Activated T-helper 1 cell treated with anti-CD3 and anti-CD28 coated beads, Interleukin-12 subunit alpha, Interleukin-12 subunit beta, Interleukin-2, Interleukin-4 antibody, amounts not matched to agents 30 ng/mL and 10 ng/mL and 1 ng/mL, durations not matched to agents 14 hours and 24 hours and 36 hours (primary cell): ENCODE measurements at regions of chr7 and their contacts with region 1.

Region 1: GRCh38 chr7:142811154-142811737 is 40.5 kb downstream of the PRSS2 start:
- DNase-seq: no peak
- H3K4me3 Mint-ChIP-seq: peak overlapping the region; percentile 79
- H3K27ac Mint-ChIP-seq: peak overlapping the region; percentile 99
- H3K4me1 Mint-ChIP-seq: peaks cover 80% of the 10 kb centered on the region
- H3K27me3 Mint-ChIP-seq: peaks cover 2% of the 10 kb centered on the region

Region 2: GRCh38 chr7:141558544-141559183 is 1252.6 kb before region 1 on chr7:
- intact Hi-C with region 1: loop called (anchors 2 kb)
- DNase-seq: peak; percentile 31
- H3K4me3 Mint-ChIP-seq: peak overlapping the region; percentile 60
- H3K27ac Mint-ChIP-seq: peak overlapping the region; percentile 94
- H3K4me1 Mint-ChIP-seq: peaks cover 83% of the 10 kb centered on the region
- H3K27me3 Mint-ChIP-seq: no peaks in the 10 kb centered on the region

Region 3: GRCh38 chr7:142231716-142232115 is 579.5 kb before region 1 on chr7:
- intact Hi-C with region 1: no loop called
- DNase-seq: no peak
- H3K4me3 Mint-ChIP-seq: no peak overlapping the region
- H3K27ac Mint-ChIP-seq: no peak overlapping the region
- H3K4me1 Mint-ChIP-seq: no peaks in the 10 kb centered on the region
- H3K27me3 Mint-ChIP-seq: peaks cover 8% of the 10 kb centered on the region

Region 4: DNA sequence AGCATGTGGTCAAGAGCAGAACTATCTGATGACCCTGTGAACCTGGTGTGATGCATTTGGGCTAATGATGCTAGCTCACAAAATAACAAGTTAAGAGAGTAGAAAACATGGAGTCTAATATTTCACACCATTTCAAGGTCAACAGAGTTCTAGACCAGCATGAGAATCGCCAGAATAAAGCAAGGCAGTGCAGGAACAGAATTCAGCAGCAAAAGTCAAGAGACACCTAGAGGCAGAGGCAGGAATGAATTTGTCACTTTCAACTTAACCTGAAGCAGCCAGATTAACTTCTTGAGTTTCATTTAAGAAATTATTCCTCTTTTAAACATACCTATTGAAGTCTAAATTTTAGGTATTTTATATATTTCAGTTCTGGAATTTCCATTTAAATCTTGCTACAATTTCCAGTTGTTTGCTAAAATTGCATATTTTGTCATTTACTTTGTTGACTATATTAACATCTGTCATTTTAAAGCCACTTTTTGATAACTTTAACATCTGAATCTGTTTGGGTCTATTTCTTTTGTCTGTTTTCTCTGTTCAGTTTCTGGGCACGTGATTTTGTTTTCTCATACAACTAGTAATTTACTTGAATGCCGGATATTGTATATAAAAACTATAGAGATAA is 509.2 kb before region 1 on chr7:
- intact Hi-C with region 1: loop called (anchors 2 kb)
- DNase-seq: no peak
- H3K4me3 Mint-ChIP-seq: no peak overlapping the region
- H3K27ac Mint-ChIP-seq: no peak overlapping the region
- H3K4me1 Mint-ChIP-seq: peaks cover 10% of the 10 kb centered on the region
- H3K27me3 Mint-ChIP-seq: peaks cover 7% of the 10 kb centered on the region

Region 5: GRCh38 chr7:142523821-142524460 is 287.3 kb before region 1 on chr7:
- intact Hi-C with region 1: no loop called
- DNase-seq: no peak
- H3K4me3 Mint-ChIP-seq: no peak overlapping the region
- H3K27ac Mint-ChIP-seq: no peak overlapping the region
- H3K4me1 Mint-ChIP-seq: peaks cover 10% of the 10 kb centered on the region
- H3K27me3 Mint-ChIP-seq: peaks cover 10% of the 10 kb centered on the region

Region 6: DNA sequence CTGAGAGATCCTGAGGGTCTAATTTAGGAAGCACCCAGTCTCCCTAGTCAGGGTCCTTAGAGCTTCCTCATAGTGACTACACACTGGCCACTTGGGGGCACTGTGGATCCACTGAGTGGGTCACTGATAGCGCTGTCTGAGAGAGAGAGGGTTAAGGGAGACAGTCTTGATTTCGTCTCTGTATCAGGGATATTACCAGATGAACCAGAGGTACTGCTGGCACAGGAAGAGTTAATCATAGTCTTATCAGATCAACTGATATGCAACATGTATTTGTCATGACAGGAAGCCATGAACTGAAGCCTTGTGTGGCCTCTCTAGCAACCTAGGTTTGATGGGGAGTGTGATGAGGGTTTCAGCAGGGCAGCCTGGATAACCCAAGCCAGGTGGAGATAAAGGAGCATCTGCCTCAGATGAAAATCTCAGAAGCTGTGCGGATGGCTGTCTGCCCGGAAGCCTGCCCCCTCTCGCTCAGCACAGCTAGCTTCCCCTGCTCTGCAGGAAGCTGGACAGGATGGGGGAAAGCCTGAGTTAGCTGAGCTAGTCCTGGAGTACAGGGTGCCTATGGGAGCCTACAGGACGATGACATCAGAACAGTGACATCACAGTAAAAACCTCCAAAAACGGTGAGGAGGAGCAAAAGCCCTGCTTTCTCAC is 276.0 kb before region 1 on chr7:
- intact Hi-C with region 1: loop called (anchors 1 kb)
- DNase-seq: peak; percentile 58
- H3K4me3 Mint-ChIP-seq: peak overlapping the region; percentile 59
- H3K27ac Mint-ChIP-seq: peak overlapping the region; percentile 62
- H3K4me1 Mint-ChIP-seq: peaks cover 29% of the 10 kb centered on the region
- H3K27me3 Mint-ChIP-seq: no peaks in the 10 kb centered on the region

Region 7: DNA sequence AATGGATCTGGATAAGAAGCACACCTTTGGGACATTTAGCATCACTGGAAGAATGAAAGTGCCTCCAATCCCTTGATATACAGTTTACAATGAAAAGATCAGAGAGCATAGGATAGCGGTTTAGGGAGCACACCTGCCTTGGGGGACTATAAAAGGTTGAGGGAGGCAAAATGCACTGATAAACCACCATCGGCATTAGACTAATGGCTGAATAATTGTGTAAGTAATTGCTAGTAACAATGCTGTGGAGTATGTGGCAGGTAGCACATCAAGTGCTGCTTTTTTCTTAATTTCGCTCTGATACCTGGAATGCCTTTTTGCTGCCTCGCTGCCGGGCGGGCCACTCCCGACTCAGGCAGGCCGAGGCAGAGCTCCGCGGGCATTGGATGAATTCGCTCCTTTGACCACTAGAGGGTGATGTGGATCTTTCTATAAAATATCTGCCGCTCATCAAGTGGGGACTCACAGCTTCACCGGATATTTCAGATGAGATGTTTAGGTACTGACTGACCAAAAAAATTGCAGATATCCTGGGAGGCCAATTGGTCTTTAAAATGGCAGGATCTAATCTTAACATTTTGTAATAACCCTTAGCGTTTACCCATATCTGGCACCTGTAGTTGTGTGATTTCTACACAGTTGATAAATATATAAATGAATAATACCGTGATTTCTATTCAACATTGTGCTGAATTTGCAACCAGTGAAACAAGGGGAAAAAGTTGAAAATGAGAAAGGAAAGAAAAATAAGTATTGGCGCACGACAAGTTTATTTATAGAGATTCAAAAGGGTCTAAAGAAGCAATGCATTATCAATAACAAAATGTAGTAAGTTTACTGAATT is 178.7 kb before region 1 on chr7:
- intact Hi-C with region 1: loop called (anchors 1 kb)
- DNase-seq: peak; percentile 49
- H3K4me3 Mint-ChIP-seq: no peak overlapping the region
- H3K27ac Mint-ChIP-seq: no peak overlapping the region
- H3K4me1 Mint-ChIP-seq: peaks cover 18% of the 10 kb centered on the region
- H3K27me3 Mint-ChIP-seq: peaks cover 11% of the 10 kb centered on the region

Region 8: DNA sequence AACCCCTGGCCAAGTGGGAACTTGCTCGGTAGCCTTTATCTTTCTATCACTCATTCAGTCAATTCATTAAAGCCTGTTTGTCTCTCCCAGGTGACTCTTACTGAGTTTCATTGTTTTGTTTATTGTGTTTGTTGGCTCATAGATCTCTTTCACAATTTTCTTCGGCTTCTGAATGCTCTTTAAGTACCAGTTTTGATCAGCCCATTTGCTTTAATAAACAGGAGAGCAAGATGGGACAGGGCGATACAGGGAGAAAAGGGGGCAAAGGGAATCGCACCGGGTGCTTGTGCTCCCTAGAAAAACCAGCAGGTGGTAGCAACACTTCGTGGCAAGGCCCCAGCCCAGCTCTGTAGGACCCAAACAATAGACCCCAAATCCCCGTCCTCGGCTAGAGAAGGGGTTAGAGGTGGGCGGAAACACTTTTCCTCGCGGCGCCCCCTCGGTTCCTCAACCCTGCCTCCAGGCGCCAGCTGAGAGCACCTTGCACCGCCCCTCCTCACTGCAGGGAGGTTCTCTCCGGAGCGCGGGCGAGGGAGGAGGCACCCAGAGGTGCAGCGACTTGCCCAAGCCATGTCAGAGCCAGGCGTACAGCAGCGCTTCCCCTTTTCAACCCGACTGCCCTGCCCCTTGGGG is 42.6 kb after region 1 on chr7:
- intact Hi-C with region 1: loop called (anchors 5 kb)
- DNase-seq: peak; percentile 50
- H3K4me3 Mint-ChIP-seq: peak overlapping the region; percentile 96
- H3K27ac Mint-ChIP-seq: peak overlapping the region; percentile 82
- H3K4me1 Mint-ChIP-seq: peaks cover 7% of the 10 kb centered on the region
- H3K27me3 Mint-ChIP-seq: peaks cover 25% of the 10 kb centered on the region